Naive thymus-derived CD8-positive, alpha-beta T cell (primary cell): ENCODE measurements at regions of chr15 and their contacts with region 1.

Region 1: DNA sequence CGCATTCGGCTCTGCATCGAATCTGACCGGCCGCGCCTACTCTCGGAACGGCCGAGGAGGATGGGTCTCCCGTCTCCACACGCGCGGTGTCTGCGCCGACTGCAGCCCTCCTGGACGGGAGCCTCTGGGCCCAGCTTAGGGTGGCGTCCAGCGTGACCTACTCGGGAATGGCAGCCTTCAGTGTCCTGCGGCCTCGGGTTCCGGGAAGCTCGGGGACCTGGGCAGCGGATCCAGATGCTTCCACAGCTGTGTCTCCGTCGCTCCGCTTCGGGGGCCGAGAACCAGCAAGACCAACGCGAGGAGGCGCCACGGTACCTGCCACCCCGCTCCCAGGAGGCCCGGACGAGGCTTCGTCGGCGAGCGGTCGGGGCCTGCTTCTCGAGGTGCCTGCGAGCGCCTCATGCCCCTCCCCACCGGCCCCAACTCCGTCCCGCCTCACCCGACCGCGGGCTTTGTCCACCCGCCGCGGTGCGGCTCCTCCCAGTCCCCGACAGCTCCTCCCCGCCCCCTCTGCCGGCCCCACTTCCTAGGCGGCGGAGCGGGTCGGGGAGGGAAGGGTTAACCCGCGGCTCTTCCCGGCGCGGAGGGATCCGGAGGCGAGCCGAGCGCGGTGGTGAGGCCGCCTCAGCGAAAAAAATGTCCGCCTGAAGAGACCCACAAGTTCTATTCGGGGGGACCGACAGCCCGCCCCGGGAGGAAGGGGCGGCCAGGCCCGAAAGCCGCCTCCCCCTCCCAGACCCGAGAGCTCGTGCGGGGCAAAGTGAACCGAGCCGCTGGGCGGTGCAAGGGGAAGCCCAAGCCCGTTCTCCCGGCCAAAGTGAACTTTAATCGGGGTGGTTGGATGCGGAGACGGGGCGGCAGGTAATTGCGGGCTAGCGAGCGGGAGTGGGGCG is at the start of gene TCF12:
- DNase-seq: peak; percentile 78 to 96 (median 89)
- ATAC-seq: peak; percentile 69 to 76
- H3K4me3 Mint-ChIP-seq: peak within 1 kb of the TSS; percentile 83 to 96 (median 89)
- H3K27ac Mint-ChIP-seq: peak within 1 kb of the TSS; percentile 61 to 95 (median 88)
- H3K4me1 Mint-ChIP-seq: peaks cover 13 to 43% (median 40%) of the 10 kb centered on the region in 4 donors
- H3K27me3 Mint-ChIP-seq: no peaks in the 10 kb centered on the region
- polyA plus RNA-seq, gene TCF12: 43.2 to 54.3 (median 44.8) TPM

Region 2: GRCh38 chr15:56886932-56887781 is 31.1 kb before region 1 on chr15:
- POLR2A ChIA-PET with region 1: interaction called, 44 read pairs
- DNase-seq: peak; percentile 66 to 88 (median 78)
- ATAC-seq: peak; percentile 88 to 90
- H3K4me3 Mint-ChIP-seq: peak overlapping the region; percentile 71 to 93 (median 89)
- H3K27ac Mint-ChIP-seq: peak overlapping the region; percentile 85 to 97 (median 92)
- H3K4me1 Mint-ChIP-seq: peaks cover 17 to 28% (median 28%) of the 10 kb centered on the region in 4 donors
- H3K27me3 Mint-ChIP-seq: no peaks in the 10 kb centered on the region

Region 3: GRCh38 chr15:56929399-56929798 is 11.1 kb after region 1 on chr15:
- POLR2A ChIA-PET with region 1: interaction called, 15 read pairs
- DNase-seq: no peak
- ATAC-seq: no peak
- H3K4me3 Mint-ChIP-seq: no peak overlapping the region
- H3K27ac Mint-ChIP-seq: peak overlapping the region in 3 of 10 donors; percentile 26 to 54 (median 39)
- H3K4me1 Mint-ChIP-seq: peaks cover 24 to 78% (median 72%) of the 10 kb centered on the region in 4 donors
- H3K27me3 Mint-ChIP-seq: no peaks in the 10 kb centered on the region

Region 4: GRCh38 chr15:56964182-56964581 is 45.9 kb after region 1 on chr15:
- POLR2A ChIA-PET with region 1: no interaction called
- DNase-seq: no peak
- ATAC-seq: no peak
- H3K4me3 Mint-ChIP-seq: peak overlapping the region in 9 of 10 donors; percentile 6 to 72 (median 59)
- H3K27ac Mint-ChIP-seq: peak overlapping the region in 8 of 10 donors; percentile 67 to 86 (median 74)
- H3K4me1 Mint-ChIP-seq: peaks cover 21 to 67% (median 48%) of the 10 kb centered on the region in 4 donors
- H3K27me3 Mint-ChIP-seq: no peaks in the 10 kb centered on the region